IMR-90 (cell line): ENCODE measurements at regions of chr17 and their contacts with region 1.

Region 1: DNA sequence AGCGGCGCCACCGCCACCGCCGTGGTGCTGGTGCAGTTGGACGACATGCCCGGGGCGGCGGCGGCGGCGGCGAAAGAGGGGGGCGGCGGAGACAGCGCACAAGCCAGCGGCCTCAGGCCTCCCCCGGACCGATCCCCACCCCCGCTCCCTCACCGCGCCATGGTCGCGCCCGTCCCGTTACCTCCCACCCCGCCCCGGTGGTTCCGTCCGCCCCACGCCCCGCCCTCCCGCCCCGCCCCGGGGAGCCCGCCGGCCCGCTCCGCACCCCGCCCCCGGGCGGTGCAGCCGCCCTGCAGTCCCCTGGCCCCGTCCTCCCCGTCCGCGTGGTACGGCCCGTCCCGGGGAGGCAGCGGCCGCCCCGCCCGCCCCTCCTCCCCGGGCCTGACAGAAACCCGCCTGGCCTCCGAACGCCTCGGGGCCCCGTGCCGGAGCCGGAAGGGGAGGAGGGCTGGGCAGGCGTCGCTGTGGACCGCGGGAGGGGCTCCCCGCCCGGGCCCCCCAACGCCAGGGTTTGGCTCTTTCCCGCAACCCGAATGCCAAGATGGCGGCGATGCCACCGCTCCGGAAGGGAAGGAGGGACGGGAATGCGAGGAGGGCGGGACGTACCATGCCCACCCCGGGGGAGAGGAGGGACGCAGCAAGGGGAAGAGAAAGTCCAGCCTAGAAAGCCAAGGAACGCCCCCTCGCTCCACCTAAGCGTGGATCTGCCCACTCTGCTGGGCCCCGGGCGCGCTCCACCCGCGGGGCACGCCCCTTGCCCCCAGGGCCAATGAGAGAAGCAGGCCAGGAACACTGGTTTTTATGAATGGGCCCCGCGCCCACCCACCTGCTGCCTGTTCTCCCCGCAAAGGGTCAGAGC is at the start of gene PIP4K2B:
- DNase-seq: peak; percentile 98
- ATAC-seq: peak; percentile 94
- H3K4me3 ChIP-seq: peak within 1 kb of the TSS; percentile 61
- H3K27ac ChIP-seq: peak within 1 kb of the TSS; percentile 93
- H3K4me1 ChIP-seq: peaks cover 13% of the 10 kb centered on the region
- H3K27me3 ChIP-seq: no peaks in the 10 kb centered on the region
- CTCF ChIP-seq: no peak
- POLR2A ChIP-seq: peak; percentile 84
- RAD21 ChIP-seq: no peak
- total RNA-seq, gene PIP4K2B: 40.0 and 40.8 TPM in 2 replicates

Region 2: GRCh38 chr17:38379438-38379837 is 420.2 kb before region 1 on chr17:
- CTCF ChIA-PET with region 1: no interaction called
- POLR2A ChIA-PET with region 1: no interaction called
- dilution Hi-C with region 1: no loop called
- in situ Hi-C with region 1: no loop called
- intact Hi-C with region 1: no loop called
- DNase-seq: no peak
- ATAC-seq: no peak
- H3K4me3 ChIP-seq: no peak overlapping the region
- H3K27ac ChIP-seq: no peak overlapping the region
- H3K4me1 ChIP-seq: no peaks in the 10 kb centered on the region
- H3K27me3 ChIP-seq: no peaks in the 10 kb centered on the region
- CTCF ChIP-seq: no peak
- POLR2A ChIP-seq: no peak
- RAD21 ChIP-seq: no peak

Region 3: GRCh38 chr17:38768417-38768816 is 31.2 kb before region 1 on chr17:
- CTCF ChIA-PET with region 1: no interaction called
- POLR2A ChIA-PET with region 1: interaction called, 15 read pairs
- dilution Hi-C with region 1: no loop called
- in situ Hi-C with region 1: no loop called
- intact Hi-C with region 1: no loop called
- DNase-seq: no peak
- ATAC-seq: no peak
- H3K4me3 ChIP-seq: no peak overlapping the region
- H3K27ac ChIP-seq: no peak overlapping the region
- H3K4me1 ChIP-seq: no peaks in the 10 kb centered on the region
- H3K27me3 ChIP-seq: no peaks in the 10 kb centered on the region
- CTCF ChIP-seq: no peak
- POLR2A ChIP-seq: no peak
- RAD21 ChIP-seq: no peak

Region 4: GRCh38 chr17:38824899-38825761 is 25.5 kb after region 1 on chr17 and contains the start of gene CWC25:
- CTCF ChIA-PET with region 1: no interaction called
- POLR2A ChIA-PET with region 1: no interaction called
- dilution Hi-C with region 1: no loop called
- in situ Hi-C with region 1: no loop called
- intact Hi-C with region 1: loop called (anchors 1 kb)
- DNase-seq: peak; percentile 96
- ATAC-seq: peak; percentile 90
- H3K4me3 ChIP-seq: peak within 1 kb of the TSS; percentile 62
- H3K27ac ChIP-seq: peak within 1 kb of the TSS; percentile 95
- H3K4me1 ChIP-seq: 0 out of 2 replicates have a peak, but pooled peaks cover 3% of the 10 kb centered on the region
- H3K27me3 ChIP-seq: peaks cover under 1% of the 10 kb centered on the region; the same call in 1 of the 2 replicates
- CTCF ChIP-seq: 0 out of 2 replicates have a peak, but pooled peaks have one; percentile 0
- POLR2A ChIP-seq: peak; percentile 85
- RAD21 ChIP-seq: no peak
- total RNA-seq, gene CWC25: 9.1 and 9.7 TPM in 2 replicates

Region 5: DNA sequence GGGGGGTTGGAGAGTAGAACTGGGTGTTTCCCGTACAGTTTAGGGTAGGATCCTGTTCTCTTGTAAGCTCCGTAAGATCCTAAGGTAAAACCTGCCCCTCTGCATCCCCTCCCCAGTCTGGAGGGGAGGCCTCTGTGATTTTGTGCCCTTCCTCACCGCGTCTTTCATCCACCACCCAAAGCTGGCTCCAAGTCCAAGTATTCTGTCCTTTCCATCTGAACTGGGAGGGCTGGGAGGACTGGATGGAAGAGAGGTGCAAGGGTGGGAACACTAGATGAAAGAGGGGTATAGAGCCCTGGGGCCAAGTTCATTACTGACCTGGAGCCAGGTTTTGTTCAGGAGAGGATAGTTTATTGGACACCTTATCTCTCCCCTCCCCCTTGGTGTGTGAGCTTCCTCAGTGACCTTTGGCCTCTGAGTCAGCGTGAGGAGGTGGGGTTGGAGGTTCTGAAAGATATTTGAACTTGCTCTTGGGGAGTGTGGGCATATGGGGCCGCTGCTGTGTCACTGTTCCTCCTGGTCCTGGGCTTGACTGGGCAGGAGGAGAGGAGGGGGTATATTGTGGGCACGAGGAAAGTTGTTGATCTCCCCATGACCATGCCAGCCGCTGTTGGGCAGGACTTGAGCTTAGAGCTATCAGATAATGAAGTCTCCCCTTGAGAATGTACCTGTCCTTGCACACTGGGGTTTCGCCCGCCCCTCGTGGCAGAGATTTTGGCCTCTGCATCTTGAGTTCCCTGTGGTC is 71.8 kb after region 1 on chr17:
- CTCF ChIA-PET with region 1: no interaction called
- POLR2A ChIA-PET with region 1: no interaction called
- dilution Hi-C with region 1: no loop called
- in situ Hi-C with region 1: no loop called
- intact Hi-C with region 1: no loop called
- DNase-seq: peak; percentile 80
- ATAC-seq: peak; percentile 3; the same call in 1 of the 2 replicates
- H3K4me3 ChIP-seq: peak overlapping the region; percentile 90
- H3K27ac ChIP-seq: peak overlapping the region; percentile 88
- H3K4me1 ChIP-seq: peaks cover 42% of the 10 kb centered on the region
- H3K27me3 ChIP-seq: no peaks in the 10 kb centered on the region
- CTCF ChIP-seq: 0 out of 2 replicates have a peak, but pooled peaks have one; percentile 15
- POLR2A ChIP-seq: no peak
- RAD21 ChIP-seq: peak; percentile 42; the same call in 1 of the 2 replicates